GM12878 (cell line): ENCODE measurements at regions of chr1 and their contacts with region 1.

Region 1: DNA sequence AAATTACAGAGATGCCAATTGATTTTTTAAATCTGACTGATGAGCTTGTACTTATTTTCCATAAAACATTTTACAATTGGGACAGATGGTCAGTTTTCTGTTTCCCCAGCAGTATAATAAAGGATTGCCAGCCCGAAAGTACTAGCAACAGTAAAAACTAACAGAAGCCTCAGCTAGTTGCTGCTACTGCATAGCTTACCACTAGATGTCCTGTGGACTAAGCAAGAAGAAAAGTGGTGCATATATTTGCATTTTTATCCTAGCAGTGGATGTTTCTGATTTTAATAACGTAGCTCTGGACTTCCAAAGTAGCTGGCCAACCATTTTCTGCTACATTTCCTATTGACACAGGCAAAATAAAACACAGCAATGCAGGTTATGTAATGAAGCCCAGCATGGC is 241.5 kb downstream of the BARHL2 start:
- DNase-seq: no peak
- ATAC-seq: peak; percentile 75
- H3K4me3 ChIP-seq: no peak overlapping the region
- H3K27ac ChIP-seq: no peak overlapping the region
- H3K4me1 ChIP-seq: no peaks in the 10 kb centered on the region
- H3K27me3 ChIP-seq: no peaks in the 10 kb centered on the region
- CTCF ChIP-seq: peak; percentile 17 to 55 (median 51); a peak in 3 of 6 replicates
- EP300 ChIP-seq: no peak
- POLR2A ChIP-seq: no peak
- RAD21 ChIP-seq: 0 out of 2 replicates have a peak, but pooled peaks have one; percentile 22

Region 2: DNA sequence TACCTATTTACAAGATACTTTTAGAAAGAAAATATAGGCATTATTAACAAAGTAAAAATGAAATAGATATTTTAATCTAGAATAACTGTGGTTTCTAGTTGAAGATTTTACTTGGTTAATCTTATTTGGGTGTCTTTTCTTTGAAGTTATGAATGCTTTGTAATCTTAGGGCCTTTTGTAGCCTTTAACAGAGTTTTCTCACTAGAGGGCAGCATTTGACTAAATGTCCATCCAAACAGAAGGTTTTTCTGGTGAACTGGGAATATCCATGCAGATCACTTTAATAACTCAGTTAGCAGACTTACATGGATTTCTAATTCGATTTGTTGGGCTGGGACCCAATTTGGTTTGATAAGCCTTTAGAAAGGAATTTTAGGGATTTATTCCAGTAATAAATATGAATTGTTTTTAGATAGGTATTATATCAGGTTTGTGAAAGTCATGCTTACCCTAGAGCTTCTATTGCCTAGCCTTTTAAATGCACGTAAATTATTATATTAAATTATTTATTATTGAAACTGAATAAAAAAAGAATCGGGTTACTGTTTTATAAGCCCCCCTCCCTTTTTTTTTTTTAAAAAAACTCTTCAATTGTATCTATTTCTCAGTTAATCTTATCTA is 361.0 kb before region 1 on chr1:
- CTCF ChIA-PET with region 1: no interaction called
- POLR2A ChIA-PET with region 1: no interaction called
- RAD21 ChIA-PET with region 1: interaction called, 3 read pairs
- SMC1A ChIA-PET with region 1: interaction called, 3 read pairs
- in situ Hi-C with region 1: no loop called
- intact Hi-C with region 1: loop called (anchors 10 kb)
- DNase-seq: peak; percentile 8
- ATAC-seq: peak; percentile 65
- H3K4me3 ChIP-seq: no peak overlapping the region
- H3K27ac ChIP-seq: no peak overlapping the region
- H3K4me1 ChIP-seq: no peaks in the 10 kb centered on the region
- H3K27me3 ChIP-seq: no peaks in the 10 kb centered on the region
- CTCF ChIP-seq: peak; percentile 55 to 73 (median 72); a peak in 5 of 6 replicates
- EP300 ChIP-seq: no peak
- POLR2A ChIP-seq: no peak
- RAD21 ChIP-seq: peak; percentile 93

Region 3: DNA sequence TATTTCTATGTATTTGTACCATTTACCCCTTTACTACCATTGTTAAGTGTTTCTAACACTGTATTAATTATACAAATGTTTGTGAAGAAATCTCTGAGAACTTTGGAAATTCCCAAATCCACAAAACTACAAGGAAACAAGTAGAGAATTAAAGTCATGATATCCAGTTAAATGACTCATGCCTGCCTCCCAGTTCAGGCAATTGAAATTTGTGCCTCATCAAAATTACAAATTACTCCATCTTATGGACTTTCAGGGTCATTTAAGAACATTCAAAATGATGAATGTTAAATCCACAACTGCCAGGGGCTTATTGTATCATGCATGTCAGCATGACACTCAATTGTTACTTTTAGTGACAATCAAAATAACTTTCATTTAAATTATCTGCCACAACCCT is 198.4 kb before region 1 on chr1:
- CTCF ChIA-PET with region 1: no interaction called
- POLR2A ChIA-PET with region 1: no interaction called
- RAD21 ChIA-PET with region 1: no interaction called
- SMC1A ChIA-PET with region 1: no interaction called
- in situ Hi-C with region 1: no loop called
- intact Hi-C with region 1: no loop called
- DNase-seq: no peak
- ATAC-seq: no peak
- H3K4me3 ChIP-seq: no peak overlapping the region
- H3K27ac ChIP-seq: no peak overlapping the region
- H3K4me1 ChIP-seq: no peaks in the 10 kb centered on the region
- H3K27me3 ChIP-seq: no peaks in the 10 kb centered on the region
- CTCF ChIP-seq: no peak
- EP300 ChIP-seq: no peak
- POLR2A ChIP-seq: no peak
- RAD21 ChIP-seq: no peak

Region 4: DNA sequence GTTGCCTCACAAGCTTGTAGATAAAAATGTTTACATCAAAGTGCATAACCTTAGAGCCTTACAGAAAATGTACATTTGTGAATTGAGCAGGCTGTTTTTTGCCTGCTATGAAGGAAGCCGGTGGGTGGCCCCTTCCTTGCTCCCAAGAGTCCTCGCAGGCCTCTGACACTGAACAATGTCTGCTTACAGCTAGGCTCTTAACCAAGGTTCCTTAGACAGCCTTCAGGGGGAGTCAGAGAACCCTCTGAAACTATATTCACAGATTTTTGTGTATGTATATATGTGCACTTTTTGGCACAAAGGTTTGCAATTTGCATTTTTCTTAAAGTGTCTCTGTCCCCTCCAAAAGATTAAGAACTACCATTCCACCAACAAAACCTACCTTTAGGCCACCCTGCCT is 41.2 kb before region 1 on chr1:
- CTCF ChIA-PET with region 1: interaction called, 10 read pairs
- POLR2A ChIA-PET with region 1: interaction called, 4 read pairs
- RAD21 ChIA-PET with region 1: interaction called, 4 read pairs
- SMC1A ChIA-PET with region 1: interaction called, 29 read pairs
- in situ Hi-C with region 1: no loop called
- intact Hi-C with region 1: no loop called
- DNase-seq: no peak
- ATAC-seq: peak; percentile 84
- H3K4me3 ChIP-seq: no peak overlapping the region
- H3K27ac ChIP-seq: no peak overlapping the region
- H3K4me1 ChIP-seq: no peaks in the 10 kb centered on the region
- H3K27me3 ChIP-seq: no peaks in the 10 kb centered on the region
- CTCF ChIP-seq: peak in 2 of 3 experiments; percentile 11 to 21; a peak in 2 of 6 replicates
- EP300 ChIP-seq: no peak
- POLR2A ChIP-seq: no peak
- RAD21 ChIP-seq: no peak

Region 5: DNA sequence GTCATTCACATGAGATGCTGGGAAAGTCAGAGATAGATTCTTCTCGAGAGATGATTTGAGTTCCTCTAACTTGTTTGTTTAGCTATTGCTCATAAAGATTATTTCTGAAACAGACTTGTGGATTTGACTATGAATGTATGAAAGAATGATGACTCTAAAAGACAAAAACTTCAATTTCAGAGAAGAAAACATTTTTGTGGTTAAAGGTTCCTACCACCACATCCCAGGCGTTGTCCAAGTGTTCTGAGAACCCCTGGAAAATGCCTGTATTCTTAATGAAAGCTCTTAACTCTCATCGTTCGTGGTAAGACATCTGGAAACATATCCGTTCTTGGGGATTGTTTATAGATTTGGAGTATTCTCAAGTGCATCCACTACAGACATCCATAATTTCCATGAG is 12.8 kb after region 1 on chr1:
- CTCF ChIA-PET with region 1: interaction called, 68 read pairs
- POLR2A ChIA-PET with region 1: interaction called, 36 read pairs
- RAD21 ChIA-PET with region 1: interaction called, 96 read pairs
- SMC1A ChIA-PET with region 1: interaction called, 79 read pairs
- in situ Hi-C with region 1: no loop called
- intact Hi-C with region 1: no loop called
- DNase-seq: no peak
- ATAC-seq: no peak
- H3K4me3 ChIP-seq: no peak overlapping the region
- H3K27ac ChIP-seq: no peak overlapping the region
- H3K4me1 ChIP-seq: no peaks in the 10 kb centered on the region
- H3K27me3 ChIP-seq: no peaks in the 10 kb centered on the region
- CTCF ChIP-seq: no peak
- EP300 ChIP-seq: no peak
- POLR2A ChIP-seq: no peak
- RAD21 ChIP-seq: no peak

Region 6: DNA sequence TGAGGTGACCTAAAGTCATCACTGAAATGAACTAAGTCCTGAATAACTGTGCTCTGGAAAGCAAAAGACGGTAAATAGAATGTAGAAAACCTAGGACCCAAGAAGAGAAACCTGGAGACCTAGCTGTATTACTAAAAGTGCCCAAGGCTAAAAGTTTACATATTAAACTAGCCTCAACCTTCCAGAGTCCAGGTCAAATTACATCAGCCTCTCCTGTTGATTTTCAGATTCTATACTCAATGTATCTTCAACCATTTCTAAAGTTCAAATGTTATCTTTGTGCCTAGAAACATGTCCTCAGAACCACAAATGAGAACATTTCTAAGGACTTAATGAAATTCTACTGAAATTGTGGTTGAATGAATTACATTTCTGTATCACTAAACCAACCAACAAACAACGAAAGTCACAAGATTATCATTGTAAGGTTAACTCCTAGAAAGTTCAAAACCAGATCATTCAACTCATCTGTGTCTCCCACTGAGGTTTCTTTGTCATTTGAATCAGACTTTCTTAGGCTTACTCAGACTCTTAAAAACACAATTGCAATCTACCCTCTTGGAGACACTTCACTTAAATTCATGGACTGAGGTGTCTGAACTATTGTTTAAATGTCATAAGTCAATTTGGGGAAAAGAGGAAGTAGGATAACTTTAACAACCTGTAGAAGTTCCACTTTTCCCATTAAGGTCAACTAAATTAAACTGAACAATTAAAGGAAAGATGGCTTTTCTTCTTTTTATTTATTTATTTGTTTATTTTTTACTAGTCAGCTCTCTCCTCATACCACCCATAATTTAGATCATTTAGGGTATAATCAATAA is 33.8 kb after region 1 on chr1:
- CTCF ChIA-PET with region 1: interaction called, 28 read pairs
- POLR2A ChIA-PET with region 1: interaction called, 12 read pairs
- RAD21 ChIA-PET with region 1: interaction called, 62 read pairs
- SMC1A ChIA-PET with region 1: interaction called, 116 read pairs
- in situ Hi-C with region 1: no loop called
- intact Hi-C with region 1: loop called (anchors 5 kb)
- DNase-seq: peak; percentile 34
- ATAC-seq: peak; percentile 80
- H3K4me3 ChIP-seq: no peak overlapping the region
- H3K27ac ChIP-seq: no peak overlapping the region
- H3K4me1 ChIP-seq: no peaks in the 10 kb centered on the region
- H3K27me3 ChIP-seq: no peaks in the 10 kb centered on the region
- CTCF ChIP-seq: no peak
- EP300 ChIP-seq: peak; percentile 28 to 62; a peak in 2 of 4 replicates
- POLR2A ChIP-seq: no peak
- RAD21 ChIP-seq: no peak

Region 7: DNA sequence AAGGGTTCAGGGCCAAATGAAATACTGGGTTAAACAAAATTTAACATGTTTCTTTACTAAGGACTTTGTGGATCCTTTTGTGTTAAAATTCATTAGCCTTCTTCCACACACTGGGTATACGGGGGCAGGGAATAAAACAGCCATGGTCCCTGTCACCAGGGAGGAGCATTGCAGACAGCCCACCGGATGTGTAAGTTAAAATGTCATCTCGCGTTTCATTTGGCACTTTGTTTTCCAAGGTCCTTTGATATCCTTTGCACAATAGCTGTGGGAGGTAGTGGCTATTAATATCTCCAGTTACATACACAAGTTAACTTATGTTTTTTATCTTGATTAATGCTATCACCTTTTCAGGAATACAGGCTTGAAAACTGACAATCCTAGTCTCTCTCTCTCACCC is 68.7 kb after region 1 on chr1:
- CTCF ChIA-PET with region 1: interaction called, 17 read pairs
- POLR2A ChIA-PET with region 1: no interaction called
- RAD21 ChIA-PET with region 1: interaction called, 4 read pairs
- SMC1A ChIA-PET with region 1: interaction called, 15 read pairs
- in situ Hi-C with region 1: no loop called
- intact Hi-C with region 1: no loop called
- DNase-seq: no peak
- ATAC-seq: no peak
- H3K4me3 ChIP-seq: no peak overlapping the region
- H3K27ac ChIP-seq: no peak overlapping the region
- H3K4me1 ChIP-seq: no peaks in the 10 kb centered on the region
- H3K27me3 ChIP-seq: no peaks in the 10 kb centered on the region
- CTCF ChIP-seq: no peak
- EP300 ChIP-seq: no peak
- POLR2A ChIP-seq: no peak
- RAD21 ChIP-seq: no peak

Region 8: DNA sequence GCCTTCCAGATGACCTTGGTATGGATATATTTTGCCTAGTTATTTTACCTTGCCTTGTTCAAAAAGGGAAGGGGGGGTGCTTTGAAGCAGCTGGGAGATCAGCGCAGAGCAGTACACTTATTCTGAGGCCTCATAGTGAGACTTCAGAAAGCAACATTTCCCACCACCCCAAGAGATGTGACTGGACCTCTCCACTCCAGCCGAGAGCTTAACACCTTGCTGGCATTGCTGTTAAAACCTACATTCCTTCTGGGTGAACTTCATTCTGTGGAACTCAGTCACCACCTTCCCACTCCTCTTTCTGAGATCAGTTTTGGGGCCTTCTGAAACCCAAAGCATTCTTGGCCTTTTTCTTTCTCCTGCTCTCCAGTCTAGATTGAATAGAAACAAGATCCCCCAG is 92.8 kb after region 1 on chr1:
- CTCF ChIA-PET with region 1: interaction called, 12 read pairs
- POLR2A ChIA-PET with region 1: no interaction called
- RAD21 ChIA-PET with region 1: interaction called, 17 read pairs
- SMC1A ChIA-PET with region 1: interaction called, 15 read pairs
- in situ Hi-C with region 1: no loop called
- intact Hi-C with region 1: no loop called
- DNase-seq: no peak
- ATAC-seq: no peak
- H3K4me3 ChIP-seq: no peak overlapping the region
- H3K27ac ChIP-seq: no peak overlapping the region
- H3K4me1 ChIP-seq: no peaks in the 10 kb centered on the region
- H3K27me3 ChIP-seq: no peaks in the 10 kb centered on the region
- CTCF ChIP-seq: no peak
- EP300 ChIP-seq: no peak
- POLR2A ChIP-seq: no peak
- RAD21 ChIP-seq: no peak